Calu3 (cell line): ENCODE measurements at regions of chr2 and their contacts with region 1.

Region 1: DNA sequence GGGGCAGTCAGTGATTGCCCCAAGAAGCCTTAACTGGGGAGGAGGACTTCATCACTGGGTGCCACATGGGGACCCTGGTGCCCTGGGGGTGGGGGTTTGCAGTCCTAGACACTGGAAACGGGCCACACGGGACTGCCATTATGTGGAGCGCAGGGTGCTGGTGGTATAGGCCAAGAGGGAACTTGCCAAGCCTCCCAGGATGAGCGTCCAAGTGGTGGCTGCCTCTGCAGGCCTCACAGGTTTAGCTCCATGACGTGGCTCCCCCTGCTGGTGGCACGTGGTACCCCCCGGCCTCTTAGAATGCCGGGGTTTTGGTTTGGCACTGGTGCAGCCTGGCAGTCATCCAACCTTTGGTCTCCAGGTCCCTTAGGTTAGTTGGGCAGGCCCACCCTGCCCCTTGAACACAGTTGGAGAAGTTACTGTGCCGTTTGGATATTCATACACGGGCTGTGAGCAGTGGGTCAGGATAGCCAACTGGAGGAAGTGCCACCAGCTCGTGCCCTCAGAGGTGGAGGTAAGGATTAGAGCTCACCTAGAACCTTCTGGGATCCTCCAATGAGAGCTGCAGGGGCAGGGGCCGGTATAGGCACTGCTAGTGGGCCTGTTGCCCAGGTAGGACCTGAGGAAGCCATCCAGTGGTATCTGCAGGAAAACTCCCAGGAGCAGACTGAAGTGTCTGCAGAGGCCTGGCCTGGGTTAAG is 5.6 kb downstream of the PTMA start:
- DNase-seq: peak; percentile 96
- H3K4me3 Mint-ChIP-seq: peak overlapping the region; percentile 42
- H3K27ac Mint-ChIP-seq: peak overlapping the region; percentile 69
- H3K4me1 Mint-ChIP-seq: peaks cover 45% of the 10 kb centered on the region
- H3K27me3 Mint-ChIP-seq: no peaks in the 10 kb centered on the region
- CTCF ChIP-seq: peak; percentile 98

Region 2: DNA sequence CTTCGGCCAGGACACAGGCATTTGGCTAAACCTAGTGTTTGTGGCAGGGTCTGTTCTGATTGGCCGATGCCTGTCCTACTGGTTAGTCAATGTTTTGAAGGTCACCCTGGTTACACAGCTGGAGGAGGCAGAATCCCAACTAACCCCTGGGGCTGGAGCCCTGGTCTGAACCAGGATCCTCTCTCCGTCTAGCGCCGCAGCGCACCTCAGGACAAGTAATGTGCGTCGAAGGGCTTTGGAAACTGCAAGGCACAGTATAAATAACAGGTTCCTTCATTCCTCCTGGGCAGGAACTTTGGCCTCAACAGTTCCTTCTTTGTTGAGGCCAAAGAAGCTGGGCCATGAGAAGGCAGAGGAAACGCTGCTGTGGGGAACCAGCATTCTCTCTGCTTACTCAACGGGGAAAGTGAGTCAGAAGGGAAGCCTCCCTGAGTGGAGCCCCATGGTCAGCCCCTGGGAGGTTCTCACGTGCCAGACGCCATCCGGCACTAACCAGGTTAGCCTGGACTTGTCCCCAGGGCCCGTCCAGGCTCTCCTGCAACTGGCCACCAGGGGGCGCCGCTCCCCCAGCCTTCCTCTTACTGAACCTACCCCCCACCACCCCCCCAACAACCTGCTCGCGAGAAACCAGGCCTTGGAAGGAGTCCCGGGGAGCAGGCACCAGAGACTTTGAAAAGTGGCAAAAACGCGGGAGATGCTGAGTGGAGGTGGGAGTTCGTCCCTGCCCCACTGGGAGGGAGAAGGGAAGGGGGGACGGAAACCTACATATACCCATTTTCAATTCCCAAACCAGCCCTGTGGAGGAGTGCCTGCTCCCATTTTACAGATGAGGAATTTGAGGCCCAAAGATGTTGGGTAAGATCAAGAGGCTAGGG is 101.5 kb before region 1 on chr2:
- CTCF ChIA-PET with region 1: interaction called, 22 read pairs
- intact Hi-C with region 1: loop called (anchors 2 kb)
- DNase-seq: peak; percentile 95
- H3K4me3 Mint-ChIP-seq: peak overlapping the region; percentile 21
- H3K27ac Mint-ChIP-seq: peak overlapping the region; percentile 36
- H3K4me1 Mint-ChIP-seq: peaks cover 61% of the 10 kb centered on the region
- H3K27me3 Mint-ChIP-seq: no peaks in the 10 kb centered on the region
- CTCF ChIP-seq: peak; percentile 95

Region 3: GRCh38 chr2:231648587-231649174 is 65.2 kb before region 1 on chr2:
- CTCF ChIA-PET with region 1: interaction called, 5 read pairs
- intact Hi-C with region 1: loop called (anchors 2 kb)
- DNase-seq: peak; percentile 93
- H3K4me3 Mint-ChIP-seq: no peak overlapping the region
- H3K27ac Mint-ChIP-seq: no peak overlapping the region
- H3K4me1 Mint-ChIP-seq: peaks cover 16% of the 10 kb centered on the region
- H3K27me3 Mint-ChIP-seq: no peaks in the 10 kb centered on the region
- CTCF ChIP-seq: peak; percentile 80

Region 4: GRCh38 chr2:231666171-231667095 is 47.4 kb before region 1 on chr2:
- CTCF ChIA-PET with region 1: interaction called, 10 read pairs
- intact Hi-C with region 1: no loop called
- DNase-seq: peak; percentile 97
- H3K4me3 Mint-ChIP-seq: peak overlapping the region; percentile 75
- H3K27ac Mint-ChIP-seq: peak overlapping the region; percentile 97
- H3K4me1 Mint-ChIP-seq: no peaks in the 10 kb centered on the region
- H3K27me3 Mint-ChIP-seq: no peaks in the 10 kb centered on the region
- CTCF ChIP-seq: no peak

Region 5: DNA sequence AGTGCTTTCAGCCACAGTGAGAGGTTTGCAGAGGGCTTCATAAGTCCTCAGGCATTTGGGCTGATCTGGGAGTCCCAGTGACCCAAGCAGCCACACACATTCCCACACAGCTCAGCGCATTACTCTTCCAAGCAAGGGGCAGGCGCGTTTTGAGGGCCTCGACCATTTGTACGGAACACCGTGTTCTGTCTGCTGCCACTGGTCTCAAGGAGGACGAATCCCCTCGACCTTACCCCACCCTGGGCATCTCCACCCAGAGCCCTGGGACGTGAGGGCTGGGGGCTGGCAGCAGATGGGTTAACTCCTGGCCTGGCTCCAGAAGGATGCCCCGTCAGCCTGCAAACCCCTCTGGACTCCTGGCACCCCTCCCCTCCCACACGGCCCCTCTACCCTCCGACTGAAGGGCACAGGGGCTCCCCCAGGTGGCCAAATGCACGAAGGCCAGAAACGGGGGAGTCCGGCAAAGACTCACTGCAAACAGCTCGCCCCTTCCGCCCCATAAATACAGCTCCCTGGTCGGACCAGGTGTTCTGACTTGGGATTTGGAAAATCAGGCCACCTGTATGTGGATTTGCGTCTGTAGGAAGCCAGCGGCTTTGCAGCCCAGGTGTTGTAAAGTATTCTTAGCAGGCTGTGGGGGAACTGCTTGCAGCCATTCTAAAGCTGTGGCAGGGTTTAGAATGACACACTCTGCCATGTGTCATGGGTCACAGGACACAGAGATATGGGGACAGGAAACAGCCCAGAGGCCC is 39.1 kb before region 1 on chr2:
- CTCF ChIA-PET with region 1: interaction called, 78 read pairs
- intact Hi-C with region 1: loop called (anchors 1 kb)
- DNase-seq: peak; percentile 87
- H3K4me3 Mint-ChIP-seq: no peak overlapping the region
- H3K27ac Mint-ChIP-seq: peak overlapping the region; percentile 88
- H3K4me1 Mint-ChIP-seq: peaks cover 38% of the 10 kb centered on the region
- H3K27me3 Mint-ChIP-seq: no peaks in the 10 kb centered on the region
- CTCF ChIP-seq: peak; percentile 81